ENCODE measurements at regions of chr4 and their contacts with region 1.

Region 1: GRCh38 chr4:15805583-15806517 is 27.7 kb downstream of the CD38 start:
- DNase-seq: peak in 28 of 35 experiments; percentile 6 to 76 (median 28)
- ATAC-seq: peak in 3 of 4 experiments; percentile 55 to 66 (median 58)
- H3K4me3 ChIP-seq: no peak overlapping the region
- H3K4me3 Mint-ChIP-seq: no peak overlapping the region
- H3K27ac ChIP-seq: no peak overlapping the region
- H3K27ac Mint-ChIP-seq: peak overlapping the region in 1 of 2 donors; percentile 56
- H3K4me1 ChIP-seq: peaks cover 3 to 27% of the 10 kb centered on the region in 2 experiments
- H3K4me1 Mint-ChIP-seq: peaks cover 18 to 53% (median 29%) of the 10 kb centered on the region in 3 donors
- H3K27me3 ChIP-seq: no peaks in the 10 kb centered on the region
- H3K27me3 Mint-ChIP-seq: no peaks in the 10 kb centered on the region

Region 2: DNA sequence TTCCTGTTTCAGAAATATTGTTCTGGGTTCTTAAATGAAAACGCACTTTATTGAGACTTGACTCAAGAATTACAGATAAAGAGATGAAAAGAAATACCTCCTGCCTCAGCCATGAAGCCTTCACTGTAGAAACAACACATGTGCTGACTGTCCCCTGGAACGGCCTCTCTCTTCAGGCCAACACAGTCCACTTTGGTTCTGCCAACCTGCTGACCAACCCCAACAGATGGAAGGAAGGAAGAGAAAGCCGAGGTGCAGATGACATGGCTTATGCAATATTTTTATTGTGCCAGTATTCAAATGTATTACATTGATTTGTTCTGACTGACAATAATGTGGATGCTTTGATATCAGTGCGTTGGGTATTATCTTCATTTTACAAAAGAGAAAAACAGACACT is 632.6 kb before region 1 on chr4:
- CTCF ChIA-PET with region 1: no interaction called
- POLR2A ChIA-PET with region 1: no interaction called
- DNase-seq: no peak
- ATAC-seq: no peak
- H3K4me3 ChIP-seq: no peak overlapping the region
- H3K4me3 Mint-ChIP-seq: no peak overlapping the region
- H3K27ac ChIP-seq: no peak overlapping the region
- H3K27ac Mint-ChIP-seq: no peak overlapping the region
- H3K4me1 ChIP-seq: no peaks in the 10 kb centered on the region
- H3K4me1 Mint-ChIP-seq: no peaks in the 10 kb centered on the region
- H3K27me3 ChIP-seq: peaks cover 0 to 7% of the 10 kb centered on the region in 2 experiments
- H3K27me3 Mint-ChIP-seq: peaks cover 23 to 28% of the 10 kb centered on the region in 2 donors

Region 3: GRCh38 chr4:15729910-15730533 is 75.8 kb before region 1 on chr4:
- CTCF ChIA-PET with region 1: interaction called, 3 to 12 read pairs
- POLR2A ChIA-PET with region 1: no interaction called
- DNase-seq: peak in 19 of 35 experiments; percentile 4 to 73 (median 15)
- ATAC-seq: peak; percentile 40 to 64 (median 52)
- H3K4me3 ChIP-seq: no peak overlapping the region
- H3K4me3 Mint-ChIP-seq: no peak overlapping the region
- H3K27ac ChIP-seq: no peak overlapping the region
- H3K27ac Mint-ChIP-seq: no peak overlapping the region
- H3K4me1 ChIP-seq: peaks cover 0 to 8% of the 10 kb centered on the region in 2 experiments
- H3K4me1 Mint-ChIP-seq: peaks cover 13 to 19% (median 15%) of the 10 kb centered on the region in 3 donors
- H3K27me3 ChIP-seq: no peaks in the 10 kb centered on the region
- H3K27me3 Mint-ChIP-seq: no peaks in the 10 kb centered on the region

Region 4: GRCh38 chr4:15756361-15756861 is 49.4 kb before region 1 on chr4:
- CTCF ChIA-PET with region 1: interaction called, 10 to 15 read pairs
- POLR2A ChIA-PET with region 1: no interaction called
- DNase-seq: peak; percentile 35 to 89 (median 62)
- ATAC-seq: peak; percentile 81 to 85 (median 84)
- H3K4me3 ChIP-seq: peak overlapping the region; percentile 31 to 58
- H3K4me3 Mint-ChIP-seq: peak overlapping the region; percentile 55 to 75 (median 63)
- H3K27ac ChIP-seq: peak overlapping the region; percentile 52
- H3K27ac Mint-ChIP-seq: peak overlapping the region; percentile 83 to 85
- H3K4me1 ChIP-seq: peaks cover 42 to 47% of the 10 kb centered on the region in 2 experiments
- H3K4me1 Mint-ChIP-seq: peaks cover 43 to 61% (median 52%) of the 10 kb centered on the region in 3 donors
- H3K27me3 ChIP-seq: no peaks in the 10 kb centered on the region
- H3K27me3 Mint-ChIP-seq: no peaks in the 10 kb centered on the region

Region 5: GRCh38 chr4:15847746-15848145 is 41.9 kb after region 1 on chr4:
- CTCF ChIA-PET with region 1: no interaction called
- POLR2A ChIA-PET with region 1: interaction called in 1 of 2 experiments, 22 read pairs
- DNase-seq: no peak
- ATAC-seq: no peak
- H3K4me3 ChIP-seq: no peak overlapping the region
- H3K4me3 Mint-ChIP-seq: no peak overlapping the region
- H3K27ac ChIP-seq: no peak overlapping the region
- H3K27ac Mint-ChIP-seq: no peak overlapping the region
- H3K4me1 ChIP-seq: no peaks in the 10 kb centered on the region
- H3K4me1 Mint-ChIP-seq: no peaks in the 10 kb centered on the region
- H3K27me3 ChIP-seq: no peaks in the 10 kb centered on the region
- H3K27me3 Mint-ChIP-seq: no peaks in the 10 kb centered on the region

Region 6: DNA sequence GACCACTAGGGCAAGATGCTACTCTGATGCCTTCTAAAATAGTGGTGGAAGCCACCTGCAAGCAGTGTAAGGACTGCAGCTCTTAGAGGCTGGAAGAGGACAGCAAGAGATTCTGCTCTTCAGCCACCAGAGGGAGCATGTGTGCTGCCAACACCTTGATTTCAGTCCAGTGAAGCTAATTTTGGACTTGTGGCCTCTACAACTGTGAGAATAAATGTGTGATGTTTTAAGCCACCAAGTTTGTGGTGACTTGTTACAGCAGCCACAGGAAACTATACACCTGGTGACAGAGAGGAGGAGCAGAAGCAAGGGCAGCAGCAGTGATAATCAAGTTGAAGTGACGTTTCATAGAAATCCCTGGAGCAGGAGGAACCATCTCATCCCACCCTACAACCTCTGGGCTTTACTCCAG is 76.8 kb after region 1 on chr4:
- CTCF ChIA-PET with region 1: interaction called, 11 to 13 read pairs
- POLR2A ChIA-PET with region 1: no interaction called
- DNase-seq: peak in 33 of 35 experiments; percentile 2 to 77 (median 27)
- ATAC-seq: peak in 3 of 4 experiments; percentile 48 to 62 (median 57)
- H3K4me3 ChIP-seq: no peak overlapping the region
- H3K4me3 Mint-ChIP-seq: no peak overlapping the region
- H3K27ac ChIP-seq: no peak overlapping the region
- H3K27ac Mint-ChIP-seq: no peak overlapping the region
- H3K4me1 ChIP-seq: no peaks in the 10 kb centered on the region
- H3K4me1 Mint-ChIP-seq: peaks cover 0 to 5% (median 2%) of the 10 kb centered on the region in 3 donors
- H3K27me3 ChIP-seq: peaks cover 0 to 3% of the 10 kb centered on the region in 2 experiments
- H3K27me3 Mint-ChIP-seq: peaks cover 5 to 8% of the 10 kb centered on the region in 2 donors

Region 7: DNA sequence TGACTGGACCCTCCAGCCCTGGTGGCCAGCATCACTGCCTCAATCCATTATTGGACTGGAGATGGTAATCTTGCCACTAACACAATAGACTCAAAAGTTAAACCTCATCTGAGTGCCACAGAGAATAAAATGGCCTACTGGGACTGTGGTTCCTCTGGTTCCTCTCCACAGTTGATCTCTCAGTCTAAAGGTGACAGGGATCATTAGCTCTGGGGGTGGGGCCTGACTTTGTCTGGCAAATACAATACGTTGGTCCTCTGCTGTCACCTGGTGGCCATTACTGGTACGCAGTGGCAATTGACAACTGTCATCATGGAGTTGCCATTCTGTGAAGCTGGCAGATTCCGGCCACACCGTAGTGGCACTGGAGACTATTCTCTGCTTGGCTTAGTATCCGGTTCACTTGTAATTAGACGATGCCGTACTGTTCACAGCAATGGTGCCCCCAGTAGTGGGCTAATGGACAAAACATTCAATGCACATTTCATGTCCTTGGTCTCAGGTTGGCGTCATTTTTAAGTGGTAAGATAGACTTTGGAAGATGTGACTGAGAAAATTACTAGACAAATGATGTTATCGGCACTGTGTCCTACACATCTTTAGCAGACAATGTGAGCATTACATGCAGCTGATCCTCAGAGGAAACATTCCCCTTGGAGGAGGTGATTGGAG is 150.5 kb after region 1 on chr4:
- CTCF ChIA-PET with region 1: interaction called, 8 to 18 read pairs
- POLR2A ChIA-PET with region 1: no interaction called
- DNase-seq: peak; percentile 47 to 84 (median 73)
- ATAC-seq: peak; percentile 79 to 91 (median 86)
- H3K4me3 ChIP-seq: no peak overlapping the region
- H3K4me3 Mint-ChIP-seq: no peak overlapping the region
- H3K27ac ChIP-seq: no peak overlapping the region
- H3K27ac Mint-ChIP-seq: no peak overlapping the region
- H3K4me1 ChIP-seq: peaks cover 1 to 6% of the 10 kb centered on the region in 2 experiments
- H3K4me1 Mint-ChIP-seq: peaks cover 0 to 8% (median 3%) of the 10 kb centered on the region in 3 donors
- H3K27me3 ChIP-seq: peaks cover 0 to 2% of the 10 kb centered on the region in 2 experiments
- H3K27me3 Mint-ChIP-seq: peaks cover 0 to 4% of the 10 kb centered on the region in 2 donors

Region 8: DNA sequence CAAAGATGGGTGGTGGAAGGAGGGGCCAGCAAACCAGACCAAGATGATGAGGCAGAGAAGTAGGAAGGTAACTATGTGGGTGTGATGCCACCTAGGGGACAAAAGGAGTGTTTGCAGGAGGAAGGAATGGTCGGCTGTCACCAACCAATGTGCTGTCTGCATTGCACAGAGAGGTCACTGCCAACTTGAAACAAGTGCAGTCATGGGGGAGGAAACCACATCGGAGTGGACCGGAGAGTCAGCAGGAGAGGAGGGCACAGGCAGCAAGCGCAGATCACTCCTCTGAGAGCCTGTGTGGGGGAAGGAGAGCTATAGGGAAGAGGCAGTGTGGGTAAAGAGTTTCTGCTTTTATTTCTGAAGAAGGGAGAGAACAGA is 195.6 kb after region 1 on chr4:
- CTCF ChIA-PET with region 1: interaction called, 4 to 22 read pairs
- POLR2A ChIA-PET with region 1: no interaction called
- DNase-seq: peak in 34 of 35 experiments; percentile 1 to 76 (median 26)
- ATAC-seq: peak; percentile 78 to 81 (median 79)
- H3K4me3 ChIP-seq: no peak overlapping the region
- H3K4me3 Mint-ChIP-seq: no peak overlapping the region
- H3K27ac ChIP-seq: no peak overlapping the region
- H3K27ac Mint-ChIP-seq: no peak overlapping the region
- H3K4me1 ChIP-seq: peaks cover 0 to 6% of the 10 kb centered on the region in 2 experiments
- H3K4me1 Mint-ChIP-seq: no peaks in the 10 kb centered on the region
- H3K27me3 ChIP-seq: peaks cover 0 to 14% of the 10 kb centered on the region in 2 experiments
- H3K27me3 Mint-ChIP-seq: peaks cover 4 to 12% of the 10 kb centered on the region in 2 donors

Measured in T-cell (primary cell).